ENCODE measurements at regions of chr5 and their contacts with region 1.

Region 1: DNA sequence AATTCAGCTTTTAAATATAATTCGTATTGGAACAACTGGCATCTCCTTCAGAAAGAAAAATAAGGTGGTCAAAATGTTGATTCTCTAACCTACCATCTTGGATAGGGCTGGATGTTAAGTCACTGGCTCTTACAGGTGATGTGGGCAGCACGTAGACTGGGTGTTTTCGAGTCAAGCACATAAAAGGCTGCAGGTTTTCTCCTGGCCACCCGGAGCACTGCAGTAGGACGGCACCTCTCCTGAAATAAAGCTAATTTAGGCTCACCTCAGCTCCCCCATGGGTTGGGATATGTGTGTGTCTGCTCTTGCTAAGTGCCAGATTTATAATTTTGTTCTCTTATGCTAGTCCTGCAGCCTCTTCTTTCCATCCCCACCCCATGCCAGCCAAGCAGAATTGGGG is 80.3 kb downstream of the IQGAP2 start:
- H3K4me3 Mint-ChIP-seq: no peak overlapping the region
- H3K27ac Mint-ChIP-seq: no peak overlapping the region
- H3K4me1 Mint-ChIP-seq: peaks cover 33% of the 10 kb centered on the region
- H3K27me3 Mint-ChIP-seq: no peaks in the 10 kb centered on the region

Region 2: GRCh38 chr5:76114179-76114851 is 369.1 kb before region 1 on chr5:
- intact Hi-C with region 1: no loop called
- H3K4me3 Mint-ChIP-seq: no peak overlapping the region
- H3K27ac Mint-ChIP-seq: no peak overlapping the region
- H3K4me1 Mint-ChIP-seq: peaks cover 6% of the 10 kb centered on the region
- H3K27me3 Mint-ChIP-seq: peaks cover 14% of the 10 kb centered on the region

Region 3: DNA sequence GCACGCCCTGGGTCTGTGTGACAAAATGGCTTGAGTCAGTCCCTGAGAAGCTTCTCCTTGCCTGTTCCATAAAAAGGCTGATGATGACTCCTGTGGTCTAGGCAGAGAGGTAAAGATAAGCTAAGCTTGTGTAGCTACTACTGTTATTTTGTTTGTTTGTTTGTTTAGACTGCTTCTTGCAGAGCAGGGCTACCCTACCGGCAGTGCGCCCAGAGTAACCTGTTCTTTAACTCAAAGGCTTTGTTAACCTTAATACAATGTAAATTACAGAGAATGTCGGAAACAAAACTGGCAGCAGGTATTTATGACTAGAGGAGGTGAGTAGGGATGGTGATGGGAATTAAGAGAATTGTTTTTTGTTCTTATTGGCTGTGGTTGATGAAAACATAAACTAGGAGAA is 52.1 kb after region 1 on chr5:
- intact Hi-C with region 1: loop called (anchors 2 kb)
- H3K4me3 Mint-ChIP-seq: no peak overlapping the region
- H3K27ac Mint-ChIP-seq: no peak overlapping the region
- H3K4me1 Mint-ChIP-seq: peaks cover 34% of the 10 kb centered on the region
- H3K27me3 Mint-ChIP-seq: no peaks in the 10 kb centered on the region

Measured in dendritic cell treated with granulocyte-macrophage colony-stimulating factor and Interleukin-4, amounts not matched to agents 40 ng/mL and 50 ng/mL, for 4 days (primary cell).